Vagina (tissue), 2 donors: ENCODE measurements at regions of chr2 and their contacts with region 1.

Region 1: DNA sequence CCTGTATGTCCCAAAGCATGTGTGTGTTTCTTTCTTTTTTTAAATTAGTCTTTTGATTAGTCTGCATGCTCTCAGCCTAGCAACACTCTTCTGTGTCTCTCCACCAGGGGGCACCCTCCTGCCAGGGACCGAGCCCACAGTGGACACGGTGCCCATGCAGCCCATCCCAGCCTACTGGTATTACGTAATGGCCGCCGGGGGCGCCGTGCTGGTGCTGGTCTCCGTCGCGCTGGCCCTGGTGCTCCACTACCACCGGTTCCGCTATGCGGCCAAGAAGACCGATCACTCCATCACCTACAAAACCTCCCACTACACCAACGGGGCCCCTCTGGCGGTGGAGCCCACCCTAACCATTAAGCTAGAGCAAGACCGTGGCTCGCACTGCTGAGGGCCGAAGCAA is 93.8 kb downstream of the NRP2 start:
- DNase-seq: no peak
- H3K4me3 ChIP-seq: no peak overlapping the region
- H3K27ac ChIP-seq: no peak overlapping the region
- H3K4me1 ChIP-seq: peaks cover 8% of the 10 kb centered on the region
- H3K27me3 ChIP-seq: no peaks in the 10 kb centered on the region
- CTCF ChIP-seq: peak in 2 of 3 experiments; percentile 33 to 40
- POLR2A ChIP-seq: no peak

Region 2: DNA sequence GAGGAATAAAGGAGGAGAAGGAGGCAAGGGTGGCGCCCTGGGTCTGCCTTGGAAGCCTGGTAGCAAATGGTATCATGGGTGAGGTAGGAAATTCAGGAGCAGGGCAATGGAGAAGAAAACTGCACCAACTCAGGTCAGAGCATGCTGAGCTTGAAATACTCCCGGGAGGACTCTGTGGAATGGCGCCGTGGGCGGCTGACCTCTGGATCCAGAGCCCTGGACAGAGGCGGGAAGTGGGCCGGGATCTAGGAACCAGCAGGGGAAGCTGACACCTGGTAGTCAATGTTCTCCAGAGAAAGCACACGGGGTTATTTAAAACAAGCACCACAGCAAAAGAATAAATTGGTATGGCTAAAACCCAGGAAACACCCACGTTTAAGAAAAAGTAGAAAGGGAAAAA is 148.5 kb after region 1 on chr2:
- intact Hi-C with region 1: loop called (anchors 5 kb)
- DNase-seq: no peak
- H3K4me3 ChIP-seq: no peak overlapping the region
- H3K27ac ChIP-seq: no peak overlapping the region
- H3K4me1 ChIP-seq: no peaks in the 10 kb centered on the region
- H3K27me3 ChIP-seq: no peaks in the 10 kb centered on the region
- CTCF ChIP-seq: no peak
- POLR2A ChIP-seq: no peak

Region 3: DNA sequence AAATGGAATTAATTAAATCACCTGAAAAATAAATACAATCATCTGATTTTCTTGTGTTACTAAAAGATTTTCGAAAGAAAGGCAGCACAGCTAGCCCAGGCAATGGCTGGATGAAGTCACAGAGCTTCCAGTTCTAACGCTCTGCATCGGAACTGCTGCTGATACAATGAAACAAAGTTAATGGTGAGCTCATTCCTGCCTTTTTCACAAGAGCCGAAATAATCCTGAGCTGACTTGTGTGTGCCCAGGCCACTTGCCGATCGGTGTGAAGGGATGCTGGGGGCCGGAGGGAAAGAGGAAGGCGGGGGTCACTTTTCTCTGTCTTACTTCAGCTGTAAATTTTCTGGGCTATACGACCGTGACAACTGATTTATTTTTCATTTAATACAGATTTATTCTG is 160.3 kb after region 1 on chr2:
- intact Hi-C with region 1: loop called (anchors 5 kb)
- DNase-seq: no peak
- H3K4me3 ChIP-seq: no peak overlapping the region
- H3K27ac ChIP-seq: no peak overlapping the region
- H3K4me1 ChIP-seq: no peaks in the 10 kb centered on the region
- H3K27me3 ChIP-seq: no peaks in the 10 kb centered on the region
- CTCF ChIP-seq: no peak
- POLR2A ChIP-seq: no peak